Activated CD4-positive, alpha-beta memory T cell treated with anti-CD3 and anti-CD28 coated beads for 36 hours (primary cell): ENCODE measurements at regions of chr7 and their contacts with region 1.

Region 1: DNA sequence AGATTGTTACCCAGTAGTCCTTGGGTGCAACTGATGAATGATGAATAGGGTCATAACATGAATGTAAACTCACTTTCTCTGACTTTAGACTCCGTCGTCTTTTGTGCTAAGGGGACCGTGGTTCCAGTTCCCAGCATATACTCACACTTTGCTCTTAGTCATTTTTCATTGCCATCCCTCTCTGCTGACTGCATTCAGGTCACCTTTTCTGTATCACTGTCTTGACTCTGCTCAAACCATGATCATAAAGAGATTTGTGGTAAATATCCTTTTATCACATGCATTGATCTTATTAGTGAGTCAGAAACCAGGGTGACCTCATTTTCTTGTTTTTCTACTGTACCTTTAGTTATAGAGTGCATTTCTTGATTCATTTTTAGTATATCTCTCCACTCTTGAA is 141.1 kb upstream of the AGR3 start:
- DNase-seq: peak; percentile 60
- H3K4me3 Mint-ChIP-seq: no peak overlapping the region
- H3K27ac Mint-ChIP-seq: peak overlapping the region; percentile 7
- H3K4me1 Mint-ChIP-seq: peaks cover 17% of the 10 kb centered on the region
- H3K27me3 Mint-ChIP-seq: peaks cover 1% of the 10 kb centered on the region

Region 2: GRCh38 chr7:17041324-17041723 is 18.4 kb after region 1 on chr7:
- CTCF ChIA-PET with region 1: no interaction called
- POLR2A ChIA-PET with region 1: no interaction called
- intact Hi-C with region 1: loop called (anchors 1 kb)
- DNase-seq: no peak
- H3K4me3 Mint-ChIP-seq: no peak overlapping the region
- H3K27ac Mint-ChIP-seq: no peak overlapping the region
- H3K4me1 Mint-ChIP-seq: peaks cover 26% of the 10 kb centered on the region
- H3K27me3 Mint-ChIP-seq: peaks cover 1% of the 10 kb centered on the region

Region 3: GRCh38 chr7:17139081-17139480 is 116.2 kb after region 1 on chr7:
- CTCF ChIA-PET with region 1: no interaction called
- POLR2A ChIA-PET with region 1: no interaction called
- intact Hi-C with region 1: loop called (anchors 1 kb)
- DNase-seq: no peak
- H3K4me3 Mint-ChIP-seq: no peak overlapping the region
- H3K27ac Mint-ChIP-seq: peak overlapping the region; percentile 82
- H3K4me1 Mint-ChIP-seq: peaks cover 70% of the 10 kb centered on the region
- H3K27me3 Mint-ChIP-seq: no peaks in the 10 kb centered on the region